ENCODE measurements at regions of chr10 and their contacts with region 1.

Region 1: DNA sequence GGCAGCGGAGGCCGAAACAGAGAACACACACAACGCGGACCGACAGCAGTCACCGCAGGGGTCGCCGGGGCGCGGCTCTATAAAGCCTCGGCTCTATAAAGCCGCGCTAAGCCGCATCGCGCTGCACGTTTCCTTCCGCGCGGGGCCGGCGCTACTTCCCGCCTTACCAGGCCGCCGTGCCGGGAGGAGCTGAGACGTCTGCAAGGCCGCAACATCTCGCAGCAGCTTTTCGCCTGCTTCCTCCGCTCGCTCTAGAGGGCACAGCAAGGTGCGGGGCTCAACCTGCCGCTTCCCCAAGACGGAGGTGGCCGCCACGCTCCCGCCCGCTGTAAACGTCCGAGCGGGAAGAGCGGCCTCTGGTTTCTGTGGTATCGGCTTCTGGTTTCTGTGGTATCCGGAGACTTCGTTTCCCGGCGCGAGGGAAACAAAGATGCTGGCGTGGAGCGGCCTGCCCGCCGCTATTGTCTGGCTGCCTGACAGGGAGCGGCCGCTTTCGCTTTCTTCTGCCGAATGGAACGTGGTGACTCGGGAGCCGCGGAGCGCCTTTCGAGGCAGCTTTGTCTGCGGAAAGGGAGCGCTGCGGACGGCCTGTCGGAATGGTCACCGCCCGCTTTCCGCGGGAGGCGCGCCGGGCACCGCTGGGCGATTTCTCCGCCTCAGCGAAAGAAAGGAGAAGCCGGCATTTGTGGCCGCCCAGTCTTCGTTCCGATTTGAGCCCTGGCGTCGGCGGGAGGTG is 91.8 kb downstream of the SPAG6 start:
- DNase-seq: peak; percentile 92
- ATAC-seq: peak; percentile 83
- H3K4me3 Mint-ChIP-seq: peak overlapping the region; percentile 90
- H3K27ac Mint-ChIP-seq: peak overlapping the region; percentile 95
- H3K4me1 Mint-ChIP-seq: peaks cover 53% of the 10 kb centered on the region
- H3K27me3 Mint-ChIP-seq: no peaks in the 10 kb centered on the region

Region 2: DNA sequence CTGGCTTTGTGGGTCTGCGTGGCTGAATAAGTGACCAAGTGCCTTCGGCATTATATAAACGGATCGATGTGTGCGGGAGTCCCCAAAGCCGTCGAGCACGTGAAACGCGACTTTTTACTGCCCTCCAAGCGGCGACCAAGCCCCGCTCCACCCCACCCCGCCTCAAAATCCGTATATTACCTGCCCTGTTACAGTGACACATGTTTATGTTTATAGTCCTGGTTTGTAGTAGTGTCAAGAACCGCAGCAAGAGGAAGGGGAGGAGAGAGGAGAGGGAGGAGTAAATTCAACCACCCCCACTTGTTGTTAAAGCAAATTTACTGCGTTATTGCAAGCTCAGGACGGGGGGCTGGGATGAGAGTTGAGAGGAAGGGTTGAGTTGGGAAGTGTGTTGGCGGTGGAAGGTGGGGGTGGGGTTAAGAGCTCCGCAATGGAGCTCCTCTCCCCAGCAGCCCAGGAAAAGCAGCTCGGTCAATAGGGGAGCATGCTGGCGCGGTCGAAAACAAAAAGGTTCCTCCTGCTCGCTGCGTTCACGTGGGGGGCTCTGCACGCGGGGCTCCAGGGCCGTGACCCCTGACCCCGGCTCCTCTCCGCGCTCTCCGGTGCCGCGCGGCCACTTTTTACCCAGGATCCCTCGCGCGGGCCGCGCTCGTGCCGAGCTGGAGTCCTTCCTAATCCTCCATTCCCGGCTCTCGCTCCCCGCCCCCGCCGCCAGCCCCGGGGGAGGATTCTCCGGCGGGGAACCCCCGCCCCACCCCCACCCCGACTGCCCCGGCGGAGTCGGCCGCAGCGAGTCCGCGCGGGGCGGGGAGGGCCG is 911.5 kb before region 1 on chr10 and contains the start of gene SKIDA1:
- CTCF ChIA-PET with region 1: no interaction called
- POLR2A ChIA-PET with region 1: no interaction called
- intact Hi-C with region 1: loop called in 1 of 2 experiments (anchors 5 kb)
- DNase-seq: peak; percentile 81
- ATAC-seq: peak; percentile 71
- H3K4me3 Mint-ChIP-seq: peak within 1 kb of the TSS; percentile 80
- H3K27ac Mint-ChIP-seq: peak within 1 kb of the TSS; percentile 96
- H3K4me1 Mint-ChIP-seq: peaks cover 24% of the 10 kb centered on the region
- H3K27me3 Mint-ChIP-seq: peaks cover 17% of the 10 kb centered on the region
- total RNA-seq, gene SKIDA1: 0.32 to 0.54 TPM

Region 3: GRCh38 chr10:22244001-22244400 is 193.1 kb before region 1 on chr10:
- CTCF ChIA-PET with region 1: no interaction called
- POLR2A ChIA-PET with region 1: no interaction called
- intact Hi-C with region 1: loop called (anchors 1 to 2 kb)
- DNase-seq: peak; percentile 27
- ATAC-seq: no peak
- H3K4me3 Mint-ChIP-seq: no peak overlapping the region
- H3K27ac Mint-ChIP-seq: no peak overlapping the region
- H3K4me1 Mint-ChIP-seq: peaks cover 43% of the 10 kb centered on the region
- H3K27me3 Mint-ChIP-seq: peaks cover 3% of the 10 kb centered on the region

Region 4: GRCh38 chr10:22340362-22341189 is 96.5 kb before region 1 on chr10:
- CTCF ChIA-PET with region 1: interaction called, 3 read pairs
- POLR2A ChIA-PET with region 1: interaction called, 4 read pairs
- intact Hi-C with region 1: loop called in 1 of 2 experiments (anchors 2 kb)
- DNase-seq: peak; percentile 72
- ATAC-seq: peak; percentile 48
- H3K4me3 Mint-ChIP-seq: peak overlapping the region; percentile 78
- H3K27ac Mint-ChIP-seq: peak overlapping the region; percentile 89
- H3K4me1 Mint-ChIP-seq: peaks cover 34% of the 10 kb centered on the region
- H3K27me3 Mint-ChIP-seq: peaks cover 58% of the 10 kb centered on the region

Region 5: GRCh38 chr10:22475651-22476600 is 38.9 kb after region 1 on chr10:
- CTCF ChIA-PET with region 1: interaction called, 3 read pairs
- POLR2A ChIA-PET with region 1: no interaction called
- intact Hi-C with region 1: loop called in 1 of 2 experiments (anchors 1 kb)
- DNase-seq: peak; percentile 53
- ATAC-seq: peak; percentile 54
- H3K4me3 Mint-ChIP-seq: peak overlapping the region; percentile 72
- H3K27ac Mint-ChIP-seq: peak overlapping the region; percentile 80
- H3K4me1 Mint-ChIP-seq: peaks cover 13% of the 10 kb centered on the region
- H3K27me3 Mint-ChIP-seq: peaks cover 53% of the 10 kb centered on the region

Region 6: DNA sequence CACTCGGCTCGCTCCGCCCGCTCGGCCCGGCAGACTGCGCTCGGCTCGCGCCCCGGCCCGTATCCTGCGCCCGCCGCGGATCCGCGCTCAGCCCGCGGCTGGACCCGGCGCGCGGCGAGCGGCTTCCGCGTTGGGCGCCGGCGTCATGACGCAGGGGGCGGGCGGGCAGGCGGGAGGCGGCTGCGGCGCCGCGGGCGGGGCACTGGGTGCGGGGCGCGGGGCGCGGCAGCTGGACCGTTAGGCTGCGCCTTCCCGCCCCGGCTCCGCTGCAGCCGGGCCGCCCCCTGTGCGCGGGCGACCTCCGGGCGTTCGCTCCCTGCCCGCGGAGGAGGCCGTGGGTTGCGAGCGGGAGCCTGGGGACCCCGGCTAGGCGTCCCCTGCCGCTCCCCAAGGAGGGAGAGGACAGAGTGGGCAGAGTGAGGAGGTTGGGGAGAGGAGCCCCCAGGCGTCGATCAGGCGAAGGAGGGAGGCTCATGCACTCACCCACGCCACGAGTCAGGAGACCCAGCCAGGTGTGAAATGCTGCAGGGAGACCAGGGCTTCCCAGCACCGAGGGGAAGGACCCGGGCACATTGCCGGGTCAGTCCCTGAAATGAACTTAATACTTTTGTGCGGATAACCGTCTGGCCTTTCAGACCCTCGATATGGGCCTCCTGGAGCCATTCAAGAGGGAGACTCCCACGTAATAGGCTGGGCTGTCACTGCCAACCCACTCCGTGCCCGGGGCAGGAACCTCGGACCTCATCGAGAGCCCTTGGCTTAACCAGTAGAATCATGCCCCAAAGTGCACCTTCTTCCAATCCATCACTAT is 277.6 kb after region 1 on chr10 and contains the start of gene PIP4K2A:
- CTCF ChIA-PET with region 1: no interaction called
- POLR2A ChIA-PET with region 1: no interaction called
- intact Hi-C with region 1: loop called in 1 of 2 experiments (anchors 5 kb)
- DNase-seq: peak; percentile 86
- ATAC-seq: peak; percentile 86
- H3K4me3 Mint-ChIP-seq: peak within 1 kb of the TSS; percentile 86
- H3K27ac Mint-ChIP-seq: peak within 1 kb of the TSS; percentile 88
- H3K4me1 Mint-ChIP-seq: peaks cover 29% of the 10 kb centered on the region
- H3K27me3 Mint-ChIP-seq: no peaks in the 10 kb centered on the region
- total RNA-seq, gene PIP4K2A: 105 to 108 TPM

Region 7: GRCh38 chr10:23095404-23095965 is 658.4 kb after region 1 on chr10 and contains the start of gene MSRB2:
- CTCF ChIA-PET with region 1: no interaction called
- POLR2A ChIA-PET with region 1: no interaction called
- intact Hi-C with region 1: loop called in 1 of 2 experiments (anchors 5 kb)
- DNase-seq: peak; percentile 84
- ATAC-seq: peak; percentile 58
- H3K4me3 Mint-ChIP-seq: peak within 1 kb of the TSS; percentile 95
- H3K27ac Mint-ChIP-seq: peak within 1 kb of the TSS; percentile 92
- H3K4me1 Mint-ChIP-seq: peaks cover 39% of the 10 kb centered on the region
- H3K27me3 Mint-ChIP-seq: no peaks in the 10 kb centered on the region
- total RNA-seq, gene MSRB2: 8.2 to 9.0 TPM

Region 8: GRCh38 chr10:23399701-23400144 is 962.7 kb after region 1 on chr10:
- CTCF ChIA-PET with region 1: no interaction called
- POLR2A ChIA-PET with region 1: no interaction called
- intact Hi-C with region 1: no loop called
- DNase-seq: no peak
- ATAC-seq: no peak
- H3K4me3 Mint-ChIP-seq: no peak overlapping the region
- H3K27ac Mint-ChIP-seq: no peak overlapping the region
- H3K4me1 Mint-ChIP-seq: no peaks in the 10 kb centered on the region
- H3K27me3 Mint-ChIP-seq: no peaks in the 10 kb centered on the region